ENCODE measurements at regions of chr4 and their contacts with region 1.

Region 1: GRCh38 chr4:170027181-170027829 is 1.1 kb upstream of the MFAP3L start:
- DNase-seq: peak; percentile 38
- H3K4me3 ChIP-seq: peak overlapping the region; percentile 73 to 83 (median 78)
- H3K27ac ChIP-seq: peak overlapping the region; percentile 77
- H3K4me1 ChIP-seq: no peaks in the 10 kb centered on the region
- H3K27me3 ChIP-seq: no peaks in the 10 kb centered on the region
- CTCF ChIP-seq: no peak

Region 2: DNA sequence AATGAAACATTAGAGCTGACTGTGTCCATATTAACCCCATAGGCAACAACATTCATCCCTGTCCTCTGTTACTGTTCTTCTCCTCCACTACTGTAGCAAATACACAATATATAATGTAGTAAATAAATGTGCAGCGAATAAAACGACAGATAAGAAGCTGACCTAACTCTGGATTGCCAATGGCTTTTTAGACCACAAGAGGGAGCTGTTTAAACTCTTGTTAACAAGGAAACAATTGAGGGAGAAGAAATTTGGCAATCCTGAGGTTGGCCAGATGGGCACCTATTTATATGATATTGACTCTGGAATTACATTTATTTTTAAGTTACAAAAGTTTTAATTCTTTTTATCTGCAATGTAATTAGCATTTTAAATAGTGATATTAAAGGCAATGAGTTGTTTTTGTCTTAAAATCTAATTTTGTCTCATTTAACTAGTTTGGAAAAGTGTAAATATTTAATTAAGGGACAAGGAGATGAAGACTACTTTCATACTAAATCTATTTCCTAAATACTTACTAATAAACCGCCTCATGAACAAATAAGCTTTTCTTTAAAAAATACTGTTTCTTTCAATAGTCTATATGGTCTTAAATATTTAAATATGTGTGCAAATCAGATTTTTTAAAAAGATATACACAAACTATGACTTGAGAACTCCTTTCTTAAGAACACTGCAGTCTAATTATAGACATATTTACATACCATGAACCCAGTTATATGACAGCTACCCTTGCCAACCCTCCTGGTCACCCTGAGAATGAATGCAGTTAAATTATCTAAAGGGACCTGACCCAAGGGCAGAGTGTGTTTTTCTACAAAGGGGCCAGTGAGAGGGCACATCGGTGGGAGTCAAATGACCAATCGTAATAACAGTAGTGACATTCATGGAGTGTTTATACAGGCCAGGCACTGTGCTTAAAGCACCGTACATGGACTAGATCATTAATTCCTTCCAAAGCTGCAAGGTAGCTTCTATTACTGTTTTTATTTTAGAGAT is 216.7 kb before region 1 on chr4:
- dilution Hi-C with region 1: loop called (anchors 25 kb)
- DNase-seq: no peak
- H3K4me3 ChIP-seq: no peak overlapping the region
- H3K27ac ChIP-seq: no peak overlapping the region
- H3K4me1 ChIP-seq: no peaks in the 10 kb centered on the region
- H3K27me3 ChIP-seq: no peaks in the 10 kb centered on the region
- CTCF ChIP-seq: peak; percentile 22 to 69 (median 63)

Measured in keratinocyte (primary cell).